Activated CD4-positive, alpha-beta T cell treated with anti-CD3 and anti-CD28 coated beads, Interleukin-2, amount 10 ng/mL, durations not matched to agents 24 days and 14 days (primary cell): ENCODE measurements at regions of chr17 and their contacts with region 1.

Region 1: GRCh38 chr17:35088881-35089585 is 25.5 kb upstream of the RFFL start:
- DNase-seq: peak; percentile 97
- H3K4me3 Mint-ChIP-seq: peak overlapping the region; percentile 95
- H3K27ac Mint-ChIP-seq: peak overlapping the region; percentile 96
- H3K4me1 Mint-ChIP-seq: peaks cover 44% of the 10 kb centered on the region
- H3K27me3 Mint-ChIP-seq: no peaks in the 10 kb centered on the region

Region 2: GRCh38 chr17:34386697-34387550 is 702.1 kb before region 1 on chr17:
- intact Hi-C with region 1: loop called (anchors 10 kb)
- DNase-seq: no peak
- H3K4me3 Mint-ChIP-seq: peak overlapping the region; percentile 17
- H3K27ac Mint-ChIP-seq: peak overlapping the region; percentile 84
- H3K4me1 Mint-ChIP-seq: peaks cover 72% of the 10 kb centered on the region
- H3K27me3 Mint-ChIP-seq: peaks cover 14% of the 10 kb centered on the region

Region 3: GRCh38 chr17:34980681-34981537 is 108.1 kb before region 1 on chr17:
- intact Hi-C with region 1: loop called (anchors 1 kb)
- DNase-seq: peak; percentile 95
- H3K4me3 Mint-ChIP-seq: peak overlapping the region; percentile 96
- H3K27ac Mint-ChIP-seq: peak overlapping the region; percentile 96
- H3K4me1 Mint-ChIP-seq: peaks cover 47% of the 10 kb centered on the region
- H3K27me3 Mint-ChIP-seq: no peaks in the 10 kb centered on the region

Region 4: DNA sequence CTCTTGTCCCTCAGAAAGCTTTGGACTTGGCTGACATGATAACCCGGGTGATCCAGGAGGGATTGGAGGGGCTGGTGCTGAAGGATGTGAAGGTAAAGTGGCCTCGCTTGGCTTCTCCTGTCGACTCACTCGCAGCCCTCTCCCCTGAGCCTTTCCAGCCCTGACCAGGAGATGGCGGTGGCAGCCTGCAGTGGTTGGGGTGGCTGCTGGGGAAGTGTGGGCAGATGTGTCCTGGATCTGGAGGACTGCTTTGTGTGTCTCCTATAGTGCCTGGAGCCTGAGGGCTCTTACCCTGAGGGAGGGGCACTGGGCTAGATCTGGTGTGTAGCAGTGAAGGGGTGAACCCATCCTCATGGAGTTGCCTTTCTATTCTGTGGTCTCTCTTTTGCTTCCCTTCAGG is 90.8 kb before region 1 on chr17:
- intact Hi-C with region 1: loop called (anchors 1 kb)
- DNase-seq: peak; percentile 95
- H3K4me3 Mint-ChIP-seq: no peak overlapping the region
- H3K27ac Mint-ChIP-seq: peak overlapping the region; percentile 58
- H3K4me1 Mint-ChIP-seq: peaks cover 4% of the 10 kb centered on the region
- H3K27me3 Mint-ChIP-seq: no peaks in the 10 kb centered on the region

Region 5: GRCh38 chr17:35022536-35023063 is 66.4 kb before region 1 on chr17:
- intact Hi-C with region 1: loop called (anchors 1 kb)
- DNase-seq: peak; percentile 91
- H3K4me3 Mint-ChIP-seq: peak overlapping the region; percentile 64
- H3K27ac Mint-ChIP-seq: peak overlapping the region; percentile 95
- H3K4me1 Mint-ChIP-seq: peaks cover 44% of the 10 kb centered on the region
- H3K27me3 Mint-ChIP-seq: no peaks in the 10 kb centered on the region

Region 6: GRCh38 chr17:35046740-35047283 is 42.2 kb before region 1 on chr17:
- intact Hi-C with region 1: loop called (anchors 1 kb)
- DNase-seq: peak; percentile 91
- H3K4me3 Mint-ChIP-seq: peak overlapping the region; percentile 63
- H3K27ac Mint-ChIP-seq: peak overlapping the region; percentile 94
- H3K4me1 Mint-ChIP-seq: peaks cover 41% of the 10 kb centered on the region
- H3K27me3 Mint-ChIP-seq: no peaks in the 10 kb centered on the region

Region 7: GRCh38 chr17:35189291-35189690 is 100.3 kb after region 1 on chr17:
- intact Hi-C with region 1: no loop called
- DNase-seq: no peak
- H3K4me3 Mint-ChIP-seq: no peak overlapping the region
- H3K27ac Mint-ChIP-seq: no peak overlapping the region
- H3K4me1 Mint-ChIP-seq: peaks cover 41% of the 10 kb centered on the region
- H3K27me3 Mint-ChIP-seq: no peaks in the 10 kb centered on the region